ENCODE measurements at regions of chr16 and their contacts with region 1.

Region 1: DNA sequence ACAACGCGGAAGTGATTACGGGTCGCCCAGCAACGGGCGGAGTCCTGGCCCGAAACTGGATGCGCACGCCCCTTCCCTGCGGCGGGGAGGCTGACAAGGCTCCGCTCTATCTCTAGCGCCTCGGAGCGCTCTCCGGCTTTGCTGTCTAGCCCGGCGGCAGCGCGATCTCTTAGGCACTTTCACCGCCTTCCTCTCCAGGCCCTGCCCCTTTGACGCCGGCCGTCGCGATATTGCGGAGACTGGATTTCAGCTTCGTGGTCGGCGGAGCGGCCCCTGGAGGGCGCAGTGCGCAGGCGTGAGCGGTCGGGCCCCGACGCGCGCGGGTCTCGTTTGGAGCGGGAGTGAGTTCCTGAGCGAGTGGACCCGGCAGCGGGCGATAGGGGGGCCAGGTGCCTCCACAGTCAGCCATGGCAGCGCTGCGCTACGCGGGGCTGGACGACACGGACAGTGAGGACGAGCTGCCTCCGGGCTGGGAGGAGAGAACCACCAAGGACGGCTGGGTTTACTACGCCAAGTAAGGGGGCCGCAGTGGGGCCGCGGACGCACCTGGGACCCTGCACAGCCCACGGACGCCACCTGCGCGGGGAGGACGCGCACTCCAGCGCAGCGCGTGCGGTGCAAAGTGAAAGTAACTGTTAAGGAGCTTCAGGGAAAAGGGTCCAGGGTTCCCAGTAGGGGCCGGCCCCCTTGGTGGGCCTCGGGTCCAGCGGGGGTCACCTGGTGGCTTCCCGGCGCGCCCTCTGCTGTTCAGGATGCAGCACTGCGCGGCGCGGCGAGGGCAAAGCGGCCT is at the start of gene WWOX:
- DNase-seq: peak; percentile 97 to 98 (median 98)
- ATAC-seq: peak; percentile 96
- H3K4me3 ChIP-seq: peak within 1 kb of the TSS; percentile 46 to 91
- H3K27ac ChIP-seq: peak within 1 kb of the TSS; percentile 73 to 90 (median 85)
- H3K4me1 ChIP-seq: peaks cover 25% of the 10 kb centered on the region
- H3K27me3 ChIP-seq: no peaks in the 10 kb centered on the region
- CTCF ChIP-seq: peak; percentile 79 to 88 (median 84)
- POLR2A ChIP-seq: peak; percentile 18 to 75 (median 74)
- total RNA-seq, gene WWOX: 52.7 to 67.2 TPM

Region 2: GRCh38 chr16:77722309-77723107 is 377.1 kb before region 1 on chr16 and contains the start of gene NUDT7:
- intact Hi-C with region 1: loop called (anchors 10 kb)
- DNase-seq: peak; percentile 99 to 100 (median 100)
- ATAC-seq: peak; percentile 98
- H3K4me3 ChIP-seq: peak within 1 kb of the TSS; percentile 24 to 70
- H3K27ac ChIP-seq: peak within 1 kb of the TSS; percentile 83 to 90 (median 86)
- H3K4me1 ChIP-seq: peaks cover 10% of the 10 kb centered on the region
- H3K27me3 ChIP-seq: no peaks in the 10 kb centered on the region
- CTCF ChIP-seq: peak in 2 of 7 experiments; percentile 22 to 23
- POLR2A ChIP-seq: peak; percentile 62 to 91 (median 84)
- total RNA-seq, gene NUDT7: 5.2 to 9.2 TPM

Region 3: GRCh38 chr16:78249068-78249467 is 149.5 kb after region 1 on chr16:
- intact Hi-C with region 1: no loop called
- DNase-seq: peak; percentile 65 to 83 (median 74)
- ATAC-seq: peak; percentile 83
- H3K4me3 ChIP-seq: no peak overlapping the region
- H3K27ac ChIP-seq: peak overlapping the region in 1 of 4 donors; percentile 48
- H3K4me1 ChIP-seq: peaks cover 33% of the 10 kb centered on the region
- H3K27me3 ChIP-seq: no peaks in the 10 kb centered on the region
- CTCF ChIP-seq: peak in 6 of 7 experiments; percentile 22 to 60 (median 49)
- POLR2A ChIP-seq: no peak